Activated T-helper 1 cell treated with anti-CD3 and anti-CD28 coated beads, Interleukin-12 subunit alpha, Interleukin-12 subunit beta, Interleukin-2, Interleukin-4 antibody, amounts not matched to agents 30 ng/mL and 10 ng/mL and 1 ng/mL, durations not matched to agents 14 hours and 24 hours and 36 hours (primary cell): ENCODE measurements at regions of chr13 and their contacts with region 1.

Region 1: DNA sequence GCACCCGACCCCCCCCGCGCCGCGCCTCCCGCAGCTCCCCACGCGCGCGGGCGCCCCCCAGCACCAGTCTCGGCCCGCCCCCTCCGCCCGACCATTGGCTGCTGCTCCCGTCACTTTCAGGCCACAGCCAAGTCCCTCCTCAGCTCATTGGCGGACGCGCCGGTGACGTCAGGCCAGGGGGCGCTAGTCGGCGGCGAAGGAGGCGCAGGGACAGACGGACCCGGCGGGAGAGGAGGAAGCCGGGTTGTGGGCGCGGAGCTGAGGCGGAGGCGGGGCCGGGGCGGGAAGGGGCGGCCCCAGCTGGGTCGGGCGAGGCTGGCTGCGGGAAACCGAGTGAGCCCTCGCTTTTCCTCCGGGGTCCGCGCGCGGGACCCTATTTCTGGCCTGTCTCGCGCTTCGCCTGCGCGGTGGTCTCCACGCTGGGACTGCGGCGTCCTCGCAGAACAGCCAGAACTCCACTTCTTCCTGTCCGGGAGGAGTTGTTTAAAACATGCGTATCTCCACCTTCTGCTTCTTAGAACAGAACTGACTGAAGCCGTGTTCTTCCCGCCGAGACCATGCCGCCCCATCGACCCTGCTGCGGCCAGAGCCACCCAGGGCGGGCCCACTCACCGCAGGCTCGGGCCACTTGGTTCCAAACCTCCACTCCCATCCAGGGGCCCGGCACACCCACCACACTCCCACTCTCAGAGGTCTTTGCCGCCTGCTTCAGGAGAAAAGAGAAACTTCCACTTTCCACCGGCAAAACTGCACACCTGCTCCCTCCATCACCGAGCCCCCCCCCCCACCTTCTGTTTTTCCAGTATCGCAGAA is 459 bp upstream of the TMTC4 start:
- DNase-seq: peak; percentile 100
- H3K4me3 Mint-ChIP-seq: peak overlapping the region; percentile 87
- H3K27ac Mint-ChIP-seq: peak overlapping the region; percentile 86
- H3K4me1 Mint-ChIP-seq: peaks cover 31% of the 10 kb centered on the region
- H3K27me3 Mint-ChIP-seq: peaks cover 10% of the 10 kb centered on the region

Region 2: DNA sequence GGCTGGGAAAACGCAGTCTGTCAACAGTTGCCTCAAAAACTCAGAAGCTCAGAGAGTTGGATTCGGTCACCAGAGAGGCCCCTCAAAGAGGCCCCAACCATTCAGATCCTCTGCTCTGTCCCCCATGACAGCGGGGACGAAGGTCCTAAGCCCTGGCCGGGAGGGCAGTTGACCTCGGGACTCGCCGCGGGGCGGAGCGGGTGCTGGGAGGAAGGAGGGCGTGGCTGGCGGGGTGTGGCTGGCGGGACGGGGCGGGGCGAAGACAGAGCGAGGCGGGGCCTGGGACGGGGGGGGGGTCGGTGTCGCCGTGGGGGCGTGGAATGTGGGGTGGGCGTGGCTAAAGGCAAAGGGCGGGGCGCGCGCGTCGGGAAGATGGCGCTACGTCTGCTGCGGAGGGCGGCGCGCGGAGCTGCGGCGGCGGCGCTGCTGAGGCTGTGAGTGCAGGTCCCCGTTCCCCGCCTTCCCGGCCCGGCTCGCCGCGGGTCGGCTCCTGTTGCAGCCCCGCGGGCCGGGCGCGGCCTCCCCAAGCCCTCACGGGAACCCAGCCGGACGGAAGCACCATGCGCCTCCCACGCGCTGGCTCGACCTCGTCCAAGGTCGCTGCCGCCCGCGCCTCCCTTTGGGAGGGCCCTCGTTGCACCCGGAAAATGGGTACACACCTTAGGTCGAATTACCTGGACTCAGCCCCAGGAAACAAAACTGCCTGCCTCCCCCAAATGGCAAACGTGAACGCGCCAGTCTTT is 1068.6 kb before region 1 on chr13:
- intact Hi-C with region 1: loop called (anchors 2 kb)
- DNase-seq: peak; percentile 82
- H3K4me3 Mint-ChIP-seq: peak within 1 kb of the TSS; percentile 89
- H3K27ac Mint-ChIP-seq: peak within 1 kb of the TSS; percentile 81
- H3K4me1 Mint-ChIP-seq: peaks cover 29% of the 10 kb centered on the region
- H3K27me3 Mint-ChIP-seq: peaks cover 4% of the 10 kb centered on the region

Region 3: DNA sequence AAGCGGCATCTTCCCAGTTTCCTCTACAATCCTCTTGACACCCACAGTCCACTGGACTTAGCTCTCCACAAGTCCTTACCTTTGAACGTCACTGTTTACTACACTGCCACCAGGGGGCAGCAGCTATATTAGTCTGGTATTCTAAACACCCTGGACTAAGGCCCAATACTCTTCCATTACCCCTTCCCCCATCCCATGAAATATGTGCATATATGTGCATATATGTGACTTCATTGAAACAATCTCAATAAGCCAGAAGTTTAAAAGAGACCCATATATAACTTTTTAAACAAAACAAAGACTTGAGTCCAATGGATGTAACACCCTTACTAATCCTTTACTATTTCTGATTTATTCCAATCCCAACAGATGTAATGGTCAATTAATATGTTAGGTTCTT is 101.9 kb before region 1 on chr13:
- intact Hi-C with region 1: loop called (anchors 1 kb)
- DNase-seq: peak; percentile 56
- H3K4me3 Mint-ChIP-seq: no peak overlapping the region
- H3K27ac Mint-ChIP-seq: no peak overlapping the region
- H3K4me1 Mint-ChIP-seq: peaks cover 24% of the 10 kb centered on the region
- H3K27me3 Mint-ChIP-seq: no peaks in the 10 kb centered on the region

Region 4: GRCh38 chr13:100875392-100876043 is 200.5 kb after region 1 on chr13:
- intact Hi-C with region 1: loop called (anchors 2 kb)
- DNase-seq: peak; percentile 4
- H3K4me3 Mint-ChIP-seq: no peak overlapping the region
- H3K27ac Mint-ChIP-seq: peak overlapping the region; percentile 41
- H3K4me1 Mint-ChIP-seq: peaks cover 18% of the 10 kb centered on the region
- H3K27me3 Mint-ChIP-seq: peaks cover 5% of the 10 kb centered on the region

Region 5: DNA sequence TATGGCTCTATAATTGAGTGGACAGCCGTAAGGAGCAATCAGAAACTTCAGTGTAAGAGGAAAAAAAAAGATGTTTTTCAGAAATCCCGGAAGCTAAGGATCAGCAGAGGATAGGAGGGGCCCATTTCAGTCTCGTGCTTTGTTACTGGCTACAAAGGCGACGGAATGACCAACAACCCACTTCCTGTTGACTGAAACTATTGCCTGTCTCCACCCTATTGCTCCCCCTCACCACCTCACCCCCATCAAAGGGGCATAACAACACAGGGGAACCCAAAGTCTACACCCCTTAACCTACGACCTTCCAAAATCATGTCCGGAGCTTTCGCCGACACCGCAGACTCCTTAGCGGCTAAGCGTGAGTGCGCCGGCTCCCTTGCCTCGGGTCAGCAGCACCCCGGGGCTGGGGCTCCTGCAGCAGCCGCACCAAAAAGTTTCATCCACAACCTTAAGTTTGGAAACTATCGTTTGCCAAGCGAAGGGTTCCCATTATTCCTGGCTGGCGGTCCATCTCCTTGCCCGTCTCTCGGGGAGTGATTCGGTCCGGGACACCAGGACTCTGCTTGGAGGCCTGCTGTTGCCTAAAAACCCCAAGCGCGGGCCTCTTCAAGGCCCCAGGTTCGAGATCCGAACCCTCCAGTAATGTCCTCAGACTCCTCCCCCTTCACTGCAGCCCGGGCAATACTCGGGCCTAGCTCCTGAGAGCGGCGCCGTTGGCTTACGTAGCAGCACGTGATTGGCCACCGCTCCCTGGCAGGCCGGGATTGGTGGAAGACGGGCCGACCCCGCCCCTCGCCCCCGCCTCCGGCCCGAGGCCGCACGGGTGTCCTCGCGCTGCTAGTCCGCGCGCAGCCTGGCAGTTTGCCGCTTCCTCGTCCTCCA is 1921.3 kb after region 1 on chr13 and contains the start of gene TPP2:
- intact Hi-C with region 1: loop called (anchors 2 kb)
- DNase-seq: peak; percentile 98
- H3K4me3 Mint-ChIP-seq: peak within 1 kb of the TSS; percentile 95
- H3K27ac Mint-ChIP-seq: peak within 1 kb of the TSS; percentile 97
- H3K4me1 Mint-ChIP-seq: peaks cover 72% of the 10 kb centered on the region
- H3K27me3 Mint-ChIP-seq: no peaks in the 10 kb centered on the region
- total RNA-seq, gene TPP2: 77.0 and 78.9 TPM in 2 replicates